ENCODE measurements at regions of chr4 and their contacts with region 1.

Region 1: GRCh38 chr4:184529283-184529682 is 54.9 kb upstream of the IRF2 start:
- DNase-seq: peak; percentile 98
- H3K4me3 ChIP-seq: no peak overlapping the region
- H3K27ac ChIP-seq: peak overlapping the region; percentile 86
- H3K4me1 ChIP-seq: peaks cover 27% of the 10 kb centered on the region
- H3K27me3 ChIP-seq: no peaks in the 10 kb centered on the region
- CTCF ChIP-seq: peak in 1 of 2 donors; percentile 15

Region 2: DNA sequence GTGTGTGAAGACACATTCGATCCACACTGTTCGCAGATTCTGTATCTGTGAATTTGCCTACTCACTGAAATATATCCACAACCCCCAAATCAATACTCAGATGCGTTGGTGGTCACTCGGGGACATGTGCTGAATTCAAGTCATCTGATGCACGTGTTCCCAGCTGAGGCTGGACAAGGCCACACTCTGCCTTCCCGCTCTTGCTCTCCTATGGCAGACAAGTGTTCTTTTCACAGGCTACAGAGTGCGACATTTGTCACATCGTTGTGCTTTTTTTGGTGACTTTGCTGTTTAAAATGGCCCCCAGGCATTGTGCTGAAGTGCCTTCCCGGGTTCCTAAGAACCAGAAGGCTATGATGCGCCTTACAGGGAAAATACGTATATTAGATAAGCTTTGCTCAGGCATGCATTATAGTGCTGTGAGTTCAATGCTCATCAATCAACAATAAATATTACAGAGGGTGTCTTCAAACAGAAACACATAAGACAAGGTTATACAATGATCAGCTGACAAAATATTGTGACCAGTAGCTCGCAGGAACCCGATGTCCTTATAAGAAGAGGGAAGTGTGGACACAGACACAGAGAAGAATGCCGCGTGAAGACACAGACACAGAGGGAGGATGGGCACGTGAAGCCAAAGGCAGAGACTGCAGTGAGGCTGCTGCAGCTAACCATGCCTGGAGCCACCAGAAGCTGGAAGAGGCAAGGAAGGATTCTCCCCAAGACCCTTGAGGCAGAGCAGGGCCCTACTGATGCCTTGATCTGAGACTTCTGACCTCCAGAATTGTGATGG is 97.0 kb before region 1 on chr4:
- CTCF ChIA-PET with region 1: no interaction called
- dilution Hi-C with region 1: loop called (anchors 5 kb)
- in situ Hi-C with region 1: no loop called
- intact Hi-C with region 1: no loop called
- DNase-seq: no peak
- H3K4me3 ChIP-seq: no peak overlapping the region
- H3K27ac ChIP-seq: no peak overlapping the region
- H3K4me1 ChIP-seq: no peaks in the 10 kb centered on the region
- H3K27me3 ChIP-seq: no peaks in the 10 kb centered on the region
- CTCF ChIP-seq: no peak

Region 3: GRCh38 chr4:184457535-184458249 is 71.6 kb before region 1 on chr4:
- CTCF ChIA-PET with region 1: no interaction called
- dilution Hi-C with region 1: loop called (anchors 5 kb)
- in situ Hi-C with region 1: no loop called
- intact Hi-C with region 1: no loop called
- DNase-seq: no peak
- H3K4me3 ChIP-seq: no peak overlapping the region
- H3K27ac ChIP-seq: no peak overlapping the region
- H3K4me1 ChIP-seq: peaks cover 21% of the 10 kb centered on the region
- H3K27me3 ChIP-seq: no peaks in the 10 kb centered on the region
- CTCF ChIP-seq: no peak

Region 4: DNA sequence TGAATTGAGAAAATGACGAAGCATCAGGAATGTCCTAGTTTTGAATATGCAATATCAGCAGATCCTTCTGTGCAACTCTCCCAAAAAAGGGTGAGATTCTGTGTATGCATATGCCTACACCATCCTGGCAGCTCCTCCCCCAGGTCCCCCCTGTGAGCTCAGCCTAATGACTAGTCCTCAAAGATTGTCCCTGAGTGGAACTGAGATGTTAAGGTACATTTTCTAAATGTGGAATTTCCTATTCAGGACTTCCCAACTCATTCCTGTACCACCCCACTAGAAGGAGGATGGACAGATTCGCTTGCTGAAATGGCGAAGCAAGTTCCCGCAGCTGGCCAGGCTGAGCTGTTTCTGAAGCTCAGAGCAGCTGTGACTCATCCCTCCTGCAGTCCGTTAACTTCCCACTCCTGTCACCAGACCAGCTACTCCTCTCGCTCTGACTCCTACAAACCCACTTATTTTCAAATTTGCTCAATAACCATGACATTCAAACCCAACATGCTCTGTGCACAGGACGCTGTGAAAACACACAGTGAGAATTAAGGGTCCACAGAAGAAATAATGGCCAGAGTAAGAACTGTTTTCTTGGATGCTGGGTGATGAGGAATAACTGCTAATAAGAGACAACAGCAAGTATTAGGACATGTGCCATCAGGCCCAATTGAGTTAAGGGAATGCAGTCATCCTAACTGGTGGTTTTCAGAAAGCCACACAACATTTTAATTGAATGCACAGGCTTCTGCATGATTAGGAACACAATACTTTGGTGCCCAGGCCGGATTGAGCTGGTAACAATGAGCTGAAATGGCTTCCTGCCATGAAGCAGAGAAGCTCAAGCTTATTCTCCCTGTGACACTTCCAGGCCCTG is 14.9 kb before region 1 on chr4:
- CTCF ChIA-PET with region 1: no interaction called
- dilution Hi-C with region 1: no loop called
- in situ Hi-C with region 1: no loop called
- intact Hi-C with region 1: loop called (anchors 2 kb)
- DNase-seq: peak; percentile 84
- H3K4me3 ChIP-seq: peak overlapping the region; percentile 4 to 27 (median 13)
- H3K27ac ChIP-seq: peak overlapping the region; percentile 35
- H3K4me1 ChIP-seq: peaks cover 26% of the 10 kb centered on the region
- H3K27me3 ChIP-seq: no peaks in the 10 kb centered on the region
- CTCF ChIP-seq: no peak

Region 5: DNA sequence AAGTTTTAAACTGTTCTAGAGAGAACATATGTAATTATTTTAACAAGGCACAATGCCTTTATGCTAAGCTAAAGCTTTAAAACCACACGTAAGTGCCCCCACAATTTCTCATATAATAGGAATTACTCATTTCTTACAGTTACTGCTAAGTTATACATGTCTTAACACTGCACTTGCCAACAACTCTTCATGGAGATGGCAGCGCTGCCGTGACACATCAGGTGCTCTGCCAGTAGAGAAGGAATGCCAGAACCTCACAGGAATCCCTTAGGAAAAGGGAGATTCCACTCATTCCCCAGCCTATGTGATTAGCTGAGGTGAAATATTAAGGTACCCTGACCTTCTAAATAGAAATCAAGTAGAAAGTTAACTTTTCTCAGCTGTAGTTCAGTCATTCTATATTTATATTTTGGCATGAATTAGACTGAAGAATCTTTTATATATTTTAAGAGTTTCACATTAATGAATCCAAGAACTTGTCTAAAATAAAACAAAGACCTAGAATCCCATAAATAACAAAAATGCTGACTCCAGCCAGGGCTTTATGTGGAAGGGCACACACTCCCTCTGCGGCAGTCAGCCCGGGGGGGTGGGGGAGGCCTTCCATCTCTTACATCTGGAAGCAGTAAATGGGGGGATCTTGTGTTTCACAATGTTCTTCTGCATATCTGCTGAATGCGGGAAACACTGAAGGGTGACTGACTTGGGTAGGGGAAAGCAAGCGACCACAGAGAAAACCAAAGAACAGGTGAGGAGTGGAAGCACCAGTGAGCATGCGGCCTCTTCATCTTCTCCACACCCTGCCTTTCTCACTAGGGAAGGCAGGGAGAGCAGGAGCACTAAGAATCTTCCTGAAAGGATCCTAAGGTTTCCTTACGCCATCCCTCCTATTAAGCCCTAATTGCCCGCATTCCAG is 272.8 kb after region 1 on chr4:
- CTCF ChIA-PET with region 1: no interaction called
- dilution Hi-C with region 1: no loop called
- in situ Hi-C with region 1: no loop called
- intact Hi-C with region 1: no loop called
- DNase-seq: peak; percentile 88
- H3K4me3 ChIP-seq: no peak overlapping the region
- H3K27ac ChIP-seq: peak overlapping the region; percentile 24
- H3K4me1 ChIP-seq: peaks cover 28% of the 10 kb centered on the region
- H3K27me3 ChIP-seq: no peaks in the 10 kb centered on the region
- CTCF ChIP-seq: no peak